Activated B cell treated with CpG ODN at 0.5 μM for 24 hours (primary cell): ENCODE measurements at regions of chr2 and their contacts with region 1.

Region 1: DNA sequence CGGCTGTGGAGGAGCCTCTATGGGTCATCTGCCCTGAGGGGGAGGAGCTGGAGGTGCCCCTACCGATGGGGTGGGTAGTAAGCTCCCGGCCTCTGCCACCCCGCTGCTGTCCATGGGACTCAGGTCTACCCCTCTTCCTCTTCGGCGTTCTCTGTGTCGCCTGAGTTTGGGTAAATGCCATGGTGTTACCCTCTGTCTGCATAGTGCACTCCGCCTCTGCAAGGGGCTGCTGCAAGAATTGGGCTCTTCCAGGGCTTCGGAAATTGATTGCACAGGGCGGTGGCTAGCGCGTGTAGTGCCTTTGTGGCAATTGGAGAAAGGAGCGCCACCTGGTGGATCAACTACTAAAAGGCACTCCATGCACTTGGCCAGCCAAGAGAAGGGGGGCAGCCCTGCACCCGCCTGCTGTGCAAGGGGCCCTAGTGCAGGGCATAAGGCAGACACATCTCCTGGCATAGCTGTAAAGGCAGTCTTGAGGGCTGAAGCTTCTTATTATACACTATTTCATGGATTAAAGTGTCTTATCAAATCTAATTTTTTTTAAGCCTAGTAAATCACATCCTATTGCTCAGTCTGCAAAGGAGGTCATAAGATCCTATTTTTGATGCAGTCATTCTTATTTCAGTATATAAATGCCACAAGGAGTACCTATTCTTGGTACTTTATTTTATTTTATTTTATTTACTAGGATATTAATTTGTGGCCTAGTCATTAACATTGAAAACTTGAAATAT is 308.9 kb downstream of the PDE11A start:
- DNase-seq: peak; percentile 54
- ATAC-seq: peak; percentile 94
- H3K4me3 Mint-ChIP-seq: peak overlapping the region; percentile 64
- H3K27ac Mint-ChIP-seq: no peak overlapping the region
- H3K4me1 Mint-ChIP-seq: peaks cover 10% of the 10 kb centered on the region
- H3K27me3 Mint-ChIP-seq: peaks cover 21% of the 10 kb centered on the region
- CTCF ChIP-seq: peak; percentile 58

Region 2: DNA sequence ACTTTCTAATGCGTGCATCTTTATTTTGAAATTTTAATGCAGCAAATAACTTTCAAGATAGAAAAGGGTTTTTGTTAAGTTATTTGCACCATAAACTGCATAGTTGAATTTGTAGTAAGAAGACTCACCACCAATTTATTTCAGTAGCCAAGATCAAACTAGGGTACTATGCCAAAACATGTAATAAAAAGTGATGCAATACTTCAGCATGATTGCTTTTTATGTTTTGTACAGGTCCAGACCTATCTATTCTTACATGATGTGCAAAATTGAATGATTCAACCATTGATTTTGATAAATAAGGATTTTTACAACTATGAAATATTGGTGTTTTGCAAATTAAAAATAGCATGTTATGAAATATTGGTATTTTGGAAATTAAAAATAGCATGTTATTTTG is 344.4 kb before region 1 on chr2:
- CTCF ChIA-PET with region 1: no interaction called
- POLR2A ChIA-PET with region 1: no interaction called
- intact Hi-C with region 1: loop called (anchors 5 kb)
- DNase-seq: no peak
- ATAC-seq: no peak
- H3K4me3 Mint-ChIP-seq: no peak overlapping the region
- H3K27ac Mint-ChIP-seq: no peak overlapping the region
- H3K4me1 Mint-ChIP-seq: peaks cover 5% of the 10 kb centered on the region
- H3K27me3 Mint-ChIP-seq: no peaks in the 10 kb centered on the region
- CTCF ChIP-seq: no peak

Region 3: DNA sequence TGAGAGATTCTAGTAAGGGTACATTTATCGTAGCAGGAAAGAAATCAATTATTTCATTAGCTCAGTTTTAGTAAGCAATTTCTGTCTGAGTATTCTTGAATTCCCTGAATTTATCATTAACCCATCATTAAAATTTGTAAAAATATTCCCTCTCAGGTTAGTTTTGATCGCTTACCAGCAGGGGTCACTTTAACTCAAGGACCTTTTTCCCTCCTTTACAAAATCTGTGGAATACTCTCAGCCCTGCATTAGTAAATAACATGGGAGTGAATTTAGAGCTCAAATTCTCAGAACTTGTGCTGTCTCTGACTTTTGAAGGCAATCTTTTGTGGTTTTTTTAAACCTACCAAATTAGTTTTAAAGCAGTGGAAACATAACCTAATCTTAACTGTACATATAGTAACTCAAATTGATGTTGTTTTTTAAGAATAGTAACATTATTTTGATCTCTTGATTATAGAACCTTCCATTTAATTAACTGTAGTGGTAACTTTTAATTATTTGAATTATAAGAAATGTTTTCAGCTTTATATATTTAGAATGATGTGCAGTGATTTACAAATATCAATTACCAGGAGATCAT is 273.9 kb before region 1 on chr2:
- CTCF ChIA-PET with region 1: interaction called, 10 read pairs
- POLR2A ChIA-PET with region 1: no interaction called
- intact Hi-C with region 1: loop called (anchors 1 kb)
- DNase-seq: no peak
- ATAC-seq: no peak
- H3K4me3 Mint-ChIP-seq: no peak overlapping the region
- H3K27ac Mint-ChIP-seq: no peak overlapping the region
- H3K4me1 Mint-ChIP-seq: no peaks in the 10 kb centered on the region
- H3K27me3 Mint-ChIP-seq: no peaks in the 10 kb centered on the region
- CTCF ChIP-seq: no peak

Region 4: DNA sequence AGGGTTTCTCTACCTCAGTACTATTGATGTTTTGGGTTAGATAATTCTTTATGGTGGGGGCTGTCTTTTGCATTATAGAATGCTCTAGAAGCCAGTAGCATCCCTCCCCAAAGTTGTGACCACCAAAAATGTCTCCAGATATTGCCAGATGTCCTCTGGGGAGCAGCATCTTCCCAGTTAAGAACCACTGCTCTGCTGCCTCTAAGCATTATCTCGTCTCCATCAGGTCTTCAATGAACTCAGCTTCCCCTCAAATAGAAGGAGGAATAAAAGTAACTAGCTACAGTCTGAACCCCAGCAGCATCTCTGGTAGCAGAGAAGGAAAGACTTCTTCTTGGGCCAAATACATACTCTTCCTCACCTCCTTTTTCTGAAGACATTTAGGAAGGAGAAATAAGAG is 127.0 kb before region 1 on chr2:
- CTCF ChIA-PET with region 1: interaction called, 3 read pairs
- POLR2A ChIA-PET with region 1: no interaction called
- intact Hi-C with region 1: loop called (anchors 2 kb)
- DNase-seq: no peak
- ATAC-seq: no peak
- H3K4me3 Mint-ChIP-seq: no peak overlapping the region
- H3K27ac Mint-ChIP-seq: peak overlapping the region; percentile 30
- H3K4me1 Mint-ChIP-seq: peaks cover 25% of the 10 kb centered on the region
- H3K27me3 Mint-ChIP-seq: no peaks in the 10 kb centered on the region
- CTCF ChIP-seq: no peak

Region 5: GRCh38 chr2:177783835-177784744 is 20.4 kb after region 1 on chr2:
- CTCF ChIA-PET with region 1: no interaction called
- POLR2A ChIA-PET with region 1: no interaction called
- intact Hi-C with region 1: no loop called
- DNase-seq: no peak
- ATAC-seq: no peak
- H3K4me3 Mint-ChIP-seq: no peak overlapping the region
- H3K27ac Mint-ChIP-seq: no peak overlapping the region
- H3K4me1 Mint-ChIP-seq: peaks cover 4% of the 10 kb centered on the region
- H3K27me3 Mint-ChIP-seq: peaks cover 3% of the 10 kb centered on the region
- CTCF ChIP-seq: no peak